Left cardiac atrium (tissue), 4 donors: ENCODE measurements at regions of chr2 and their contacts with region 1.

Region 1: GRCh38 chr2:144244938-144245337 is 275.0 kb downstream of the ZEB2 start:
- DNase-seq: no peak
- ATAC-seq: no peak

Region 2: GRCh38 chr2:144219979-144220378 is 25.0 kb before region 1 on chr2:
- intact Hi-C with region 1: loop called in 1 of 2 experiments (anchors 2 kb)
- DNase-seq: no peak
- ATAC-seq: no peak